Endothelial cell of umbilical vein (primary cell): ENCODE measurements at regions of chr1 and their contacts with region 1.

Region 1: DNA sequence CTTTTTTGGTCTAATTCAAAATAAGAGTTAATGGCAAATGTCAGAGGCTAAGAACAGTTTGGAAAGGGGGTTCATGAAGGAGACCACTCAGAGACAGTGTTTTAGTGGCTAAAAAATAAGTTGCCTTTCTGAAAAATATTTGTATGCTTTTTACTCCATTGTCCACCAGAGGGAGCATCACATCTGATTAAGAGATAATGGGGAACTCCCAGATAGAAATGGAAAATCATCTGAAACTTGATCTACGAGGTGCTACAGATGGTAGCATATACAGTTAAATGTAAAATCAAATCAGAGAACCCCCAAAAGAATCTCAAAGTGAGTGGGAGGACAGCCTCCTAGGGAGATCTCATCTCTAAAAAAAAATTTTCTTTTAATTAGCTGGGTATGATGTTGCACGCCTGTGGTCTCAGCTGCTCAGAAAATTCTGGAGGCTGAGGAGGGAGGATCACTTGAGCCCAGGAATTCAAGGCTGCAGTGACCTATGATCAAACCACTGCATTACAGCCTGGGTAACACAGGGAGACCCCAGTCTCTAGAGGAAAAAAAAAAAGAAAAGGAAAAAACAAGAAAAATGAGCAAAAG is 9.7 kb downstream of the SMYD3 start:
- DNase-seq: peak; percentile 77
- H3K4me3 ChIP-seq: no peak overlapping the region
- H3K27ac ChIP-seq: no peak overlapping the region
- H3K4me1 ChIP-seq: no peaks in the 10 kb centered on the region
- H3K27me3 ChIP-seq: no peaks in the 10 kb centered on the region
- CTCF ChIP-seq: peak; percentile 38 to 45
- POLR2A ChIP-seq: no peak

Region 2: GRCh38 chr1:245079021-245079609 is 1418.3 kb before region 1 on chr1:
- CTCF ChIA-PET with region 1: no interaction called
- POLR2A ChIA-PET with region 1: no interaction called
- dilution Hi-C with region 1: no loop called
- intact Hi-C with region 1: loop called (anchors 2 kb)
- DNase-seq: peak; percentile 80
- H3K4me3 ChIP-seq: no peak overlapping the region
- H3K27ac ChIP-seq: no peak overlapping the region
- H3K4me1 ChIP-seq: no peaks in the 10 kb centered on the region
- H3K27me3 ChIP-seq: no peaks in the 10 kb centered on the region
- CTCF ChIP-seq: peak; percentile 36 to 58
- POLR2A ChIP-seq: no peak

Region 3: DNA sequence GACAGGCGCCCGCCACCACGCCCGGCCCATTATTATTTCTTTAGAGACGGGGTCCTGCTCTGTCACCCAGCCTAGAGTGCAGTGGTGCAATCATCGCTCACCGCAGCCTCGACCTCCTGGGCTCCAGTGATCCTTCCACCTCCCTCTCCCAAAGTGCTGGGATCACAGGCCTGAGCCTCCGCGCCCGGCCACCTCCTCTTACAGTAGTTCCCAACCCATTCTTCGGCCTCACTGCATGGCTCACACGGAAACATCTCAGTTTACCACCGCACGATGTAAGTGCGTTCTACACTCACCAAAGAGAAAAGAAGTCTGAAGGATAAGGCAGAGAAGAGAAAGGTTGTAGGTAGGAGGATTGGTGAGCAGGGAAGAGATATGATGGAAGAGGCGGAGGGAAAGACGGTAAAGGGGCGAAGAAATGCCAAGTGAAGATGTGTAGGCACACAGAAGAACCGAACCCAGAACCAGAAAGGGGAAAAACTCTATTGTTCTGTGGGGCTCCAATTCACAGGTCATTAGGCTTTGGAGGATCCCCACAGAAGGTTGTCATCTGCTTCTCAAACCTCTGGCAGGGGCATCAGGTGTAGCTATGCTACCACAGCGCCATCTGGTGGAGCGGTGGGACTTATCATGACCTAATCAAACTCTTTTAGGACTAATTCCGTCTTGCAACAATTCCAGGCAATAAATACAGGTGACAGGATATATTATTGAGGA is 494.5 kb before region 1 on chr1:
- CTCF ChIA-PET with region 1: interaction called, 3 read pairs
- POLR2A ChIA-PET with region 1: no interaction called
- dilution Hi-C with region 1: no loop called
- intact Hi-C with region 1: loop called (anchors 2 kb)
- DNase-seq: peak; percentile 83
- H3K4me3 ChIP-seq: no peak overlapping the region
- H3K27ac ChIP-seq: no peak overlapping the region
- H3K4me1 ChIP-seq: no peaks in the 10 kb centered on the region
- H3K27me3 ChIP-seq: no peaks in the 10 kb centered on the region
- CTCF ChIP-seq: peak; percentile 70 to 77
- POLR2A ChIP-seq: no peak

Region 4: DNA sequence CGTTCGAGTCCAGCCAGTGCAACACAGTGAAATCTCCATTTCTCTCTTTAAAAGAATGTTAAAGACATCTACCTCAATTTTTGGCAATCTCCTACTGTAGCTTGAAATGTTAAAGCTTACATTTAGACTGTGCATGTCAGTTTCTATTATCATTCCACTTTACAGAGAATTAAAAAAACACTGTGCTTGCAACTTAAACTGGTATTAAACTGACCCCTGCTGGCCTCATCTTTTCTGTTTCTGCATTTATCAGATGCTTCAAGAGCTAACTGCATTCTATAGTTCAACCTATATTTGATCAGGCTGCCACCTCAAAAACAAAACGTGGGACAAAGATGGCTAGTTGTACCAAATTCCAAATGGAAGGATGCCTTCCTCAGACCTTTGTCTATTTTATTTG is 216.9 kb before region 1 on chr1:
- CTCF ChIA-PET with region 1: no interaction called
- POLR2A ChIA-PET with region 1: no interaction called
- dilution Hi-C with region 1: no loop called
- intact Hi-C with region 1: loop called (anchors 1 kb)
- DNase-seq: peak; percentile 36
- H3K4me3 ChIP-seq: no peak overlapping the region
- H3K27ac ChIP-seq: no peak overlapping the region
- H3K4me1 ChIP-seq: no peaks in the 10 kb centered on the region
- H3K27me3 ChIP-seq: no peaks in the 10 kb centered on the region
- CTCF ChIP-seq: no peak
- POLR2A ChIP-seq: no peak

Region 5: GRCh38 chr1:246564839-246565750 is 67.7 kb after region 1 on chr1:
- CTCF ChIA-PET with region 1: no interaction called
- POLR2A ChIA-PET with region 1: no interaction called
- dilution Hi-C with region 1: no loop called
- intact Hi-C with region 1: no loop called
- DNase-seq: no peak
- H3K4me3 ChIP-seq: peak overlapping the region; percentile 61 to 91 (median 90)
- H3K27ac ChIP-seq: peak overlapping the region; percentile 79
- H3K4me1 ChIP-seq: peaks cover 35% of the 10 kb centered on the region
- H3K27me3 ChIP-seq: no peaks in the 10 kb centered on the region
- CTCF ChIP-seq: no peak
- POLR2A ChIP-seq: no peak

Region 6: DNA sequence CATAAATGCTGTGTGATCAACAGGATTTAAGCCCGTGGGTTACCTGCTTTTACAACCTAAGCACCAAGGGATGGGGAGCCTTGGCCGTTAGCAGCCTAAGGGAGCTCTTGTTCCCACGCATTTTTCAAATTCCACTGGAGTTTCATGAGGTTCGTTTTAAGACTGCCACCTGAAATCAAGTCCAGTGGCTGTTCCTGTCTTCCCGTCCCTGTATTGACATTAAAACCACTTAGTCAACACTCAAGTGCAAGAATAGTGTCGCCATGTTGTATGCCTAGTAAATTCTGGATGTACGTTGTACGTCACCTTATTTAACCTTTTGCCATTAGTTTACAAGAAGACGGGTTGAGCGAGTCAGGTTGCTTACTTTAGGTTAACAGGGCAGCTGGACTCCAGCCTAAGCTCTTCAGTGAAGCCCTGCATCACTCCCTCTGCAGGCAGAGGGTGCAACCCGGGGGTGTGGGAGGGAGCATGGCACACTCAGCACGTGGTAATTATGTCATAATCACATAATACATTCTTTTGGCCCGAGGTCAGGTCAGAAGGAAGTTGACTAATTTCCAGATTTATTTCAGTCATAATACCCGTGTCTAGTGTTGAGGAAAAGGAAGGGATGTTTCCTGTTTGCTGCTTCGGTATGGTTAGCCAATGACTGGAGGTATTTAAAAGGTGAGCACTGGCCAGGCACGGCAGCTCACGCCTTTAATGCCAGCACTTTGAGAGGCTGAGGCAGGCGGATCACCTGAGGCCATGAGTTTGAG is 111.4 kb after region 1 on chr1:
- CTCF ChIA-PET with region 1: no interaction called
- POLR2A ChIA-PET with region 1: no interaction called
- dilution Hi-C with region 1: no loop called
- intact Hi-C with region 1: loop called (anchors 2 kb)
- DNase-seq: peak; percentile 99
- H3K4me3 ChIP-seq: no peak overlapping the region
- H3K27ac ChIP-seq: peak overlapping the region; percentile 91
- H3K4me1 ChIP-seq: peaks cover 20% of the 10 kb centered on the region
- H3K27me3 ChIP-seq: no peaks in the 10 kb centered on the region
- CTCF ChIP-seq: peak in 1 of 2 donors; percentile 37
- POLR2A ChIP-seq: peak; percentile 27

Region 7: GRCh38 chr1:246753670-246754535 is 256.5 kb after region 1 on chr1:
- CTCF ChIA-PET with region 1: interaction called, 12 read pairs
- POLR2A ChIA-PET with region 1: no interaction called
- dilution Hi-C with region 1: no loop called
- intact Hi-C with region 1: loop called (anchors 1 kb)
- DNase-seq: peak; percentile 60
- H3K4me3 ChIP-seq: no peak overlapping the region
- H3K27ac ChIP-seq: no peak overlapping the region
- H3K4me1 ChIP-seq: no peaks in the 10 kb centered on the region
- H3K27me3 ChIP-seq: no peaks in the 10 kb centered on the region
- CTCF ChIP-seq: peak; percentile 74 to 80
- POLR2A ChIP-seq: no peak